HEK293T (cell line): ENCODE measurements at regions of chr19 and their contacts with region 1.

Region 1: DNA sequence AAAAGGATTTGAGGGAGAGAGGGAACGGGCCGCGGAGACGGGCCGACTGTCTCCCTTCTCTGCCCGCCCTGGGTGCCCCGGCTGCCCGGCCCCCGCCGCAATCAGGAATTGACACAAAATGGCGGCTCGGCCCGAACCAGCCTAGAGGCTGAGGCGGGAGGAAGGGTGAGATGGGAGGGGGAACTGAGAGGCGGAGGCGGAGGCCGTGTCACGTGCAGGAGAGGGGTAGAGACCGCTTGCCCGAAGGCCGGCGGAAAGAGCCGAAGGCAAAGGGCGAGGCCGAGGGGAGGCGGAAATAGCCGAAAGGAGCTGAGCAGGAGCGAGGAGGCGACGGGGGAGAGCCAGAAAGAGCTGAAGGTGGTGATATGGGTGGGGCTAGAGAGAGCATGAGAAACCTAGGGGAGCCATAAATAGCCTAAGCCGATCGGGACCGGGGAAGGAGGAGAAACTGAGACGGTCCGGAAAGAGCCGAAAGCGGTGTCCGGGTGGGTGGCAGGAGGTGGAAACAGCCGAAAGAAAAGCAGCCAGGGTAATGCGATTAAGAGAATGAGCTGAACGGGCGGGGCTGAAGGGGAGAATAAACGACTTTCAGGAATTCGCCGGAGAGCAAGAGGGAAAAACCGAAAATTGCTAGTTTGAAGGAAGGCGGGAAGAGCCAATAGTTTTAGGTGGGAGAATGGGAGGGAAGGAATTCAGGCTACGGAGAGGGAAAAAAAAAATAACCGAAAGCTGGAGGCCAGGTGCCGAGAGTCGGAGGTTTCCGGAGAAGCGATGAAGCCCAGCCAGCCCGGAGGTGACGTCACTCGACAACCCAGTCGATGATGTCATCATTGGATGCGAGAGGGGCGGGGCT is at the start of gene ZC3H4:
- DNase-seq: peak; percentile 95

Region 2: GRCh38 chr19:47035127-47036096 is 77.8 kb before region 1 on chr19:
- CTCF ChIA-PET with region 1: interaction called, 4 read pairs
- POLR2A ChIA-PET with region 1: interaction called, 13 read pairs
- DNase-seq: peak; percentile 93

Region 3: GRCh38 chr19:47057328-47057727 is 55.9 kb before region 1 on chr19:
- CTCF ChIA-PET with region 1: no interaction called
- POLR2A ChIA-PET with region 1: interaction called, 13 read pairs
- DNase-seq: no peak

Region 4: GRCh38 chr19:47094557-47095475 is 18.4 kb before region 1 on chr19:
- CTCF ChIA-PET with region 1: interaction called, 3 read pairs
- POLR2A ChIA-PET with region 1: interaction called, 28 read pairs
- DNase-seq: no peak

Region 5: DNA sequence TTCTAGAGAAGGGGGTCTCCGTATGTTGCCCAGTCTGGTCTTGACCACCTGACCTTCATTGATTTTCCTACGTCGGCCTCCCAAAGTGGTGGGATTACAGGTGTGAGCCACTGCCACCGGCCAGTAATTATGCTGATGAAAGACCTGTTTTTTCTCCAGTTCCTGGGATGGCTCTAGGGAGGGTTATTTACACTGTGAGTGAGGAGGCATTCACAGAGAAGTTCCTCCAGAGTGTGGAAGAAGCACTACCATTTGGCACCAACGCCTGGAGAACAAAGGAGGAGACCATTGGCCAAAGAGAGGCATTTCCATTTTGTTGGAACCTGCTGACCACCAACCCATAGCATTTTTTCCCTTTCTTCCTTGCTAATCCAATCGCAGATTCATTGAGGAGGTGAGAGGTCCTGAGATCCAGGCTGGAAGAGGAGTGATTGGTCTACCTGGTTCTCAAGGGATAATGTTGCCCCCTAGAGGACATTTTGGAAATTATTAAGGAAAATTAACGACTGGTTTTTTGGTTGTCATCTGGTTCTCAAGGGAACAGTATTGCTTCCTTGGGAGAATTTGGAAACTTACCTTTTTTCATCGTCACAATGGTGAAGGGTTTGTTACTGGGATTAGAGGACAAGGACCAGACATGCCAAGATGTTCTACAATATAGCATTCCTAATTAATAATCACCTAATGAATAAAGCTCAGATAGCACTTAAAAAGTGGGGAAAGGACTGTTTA is 11.9 kb after region 1 on chr19:
- CTCF ChIA-PET with region 1: interaction called, 8 read pairs
- POLR2A ChIA-PET with region 1: interaction called, 26 read pairs
- DNase-seq: peak; percentile 65

Region 6: DNA sequence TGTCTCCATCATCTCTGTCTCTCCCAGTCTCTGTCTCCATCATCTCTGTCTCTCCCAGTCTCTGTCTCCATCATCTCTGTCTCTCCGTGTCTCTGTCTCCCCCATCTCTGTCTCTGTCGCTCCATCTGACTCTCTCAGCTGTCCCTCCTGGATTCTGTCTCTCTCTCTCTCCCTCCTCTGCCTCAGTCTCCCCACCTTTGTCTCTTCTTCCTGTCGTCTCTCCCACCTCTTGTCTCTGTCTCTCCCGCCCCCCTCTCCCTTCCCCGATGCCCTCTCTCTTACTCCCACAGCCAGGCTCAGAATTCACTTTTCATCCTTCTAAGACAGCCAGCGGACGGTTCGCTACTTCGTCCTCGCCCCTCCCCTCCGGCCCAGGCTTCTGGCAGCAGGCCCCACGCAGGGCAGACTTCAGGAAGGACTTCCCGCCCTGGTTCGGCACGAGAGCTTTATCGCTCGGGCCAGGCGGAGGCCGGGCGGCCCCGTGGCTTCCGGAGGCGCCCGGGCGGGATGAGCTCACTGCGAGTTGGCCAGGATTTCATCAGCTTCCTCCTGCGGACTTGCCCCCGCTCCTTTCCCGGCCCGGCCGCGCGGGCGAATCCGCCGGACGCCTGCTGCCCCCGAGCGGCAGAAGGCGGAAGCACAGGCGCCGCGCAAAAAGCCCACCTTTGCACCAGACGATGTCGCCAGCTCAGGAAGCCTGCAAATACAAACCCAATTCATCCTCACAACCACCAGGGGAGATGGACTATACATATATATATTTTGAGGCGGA is 130.7 kb after region 1 on chr19:
- CTCF ChIA-PET with region 1: no interaction called
- POLR2A ChIA-PET with region 1: interaction called, 11 read pairs
- DNase-seq: peak; percentile 88